ENCODE measurements at regions of chr1 and their contacts with region 1.

Region 1: GRCh38 chr1:173392895-173393658 is 84.1 kb upstream of the PRDX6 start:
- DNase-seq: no peak
- ATAC-seq: peak; percentile 59

Region 2: GRCh38 chr1:173255214-173255813 is 137.8 kb before region 1 on chr1:
- intact Hi-C with region 1: loop called (anchors 10 kb)
- DNase-seq: no peak
- ATAC-seq: no peak

Measured in Right ventricle myocardium inferior (tissue), 1 donor.